Psoas muscle (tissue), 8 donors: ENCODE measurements at regions of chr22 and their contacts with region 1.

Region 1: DNA sequence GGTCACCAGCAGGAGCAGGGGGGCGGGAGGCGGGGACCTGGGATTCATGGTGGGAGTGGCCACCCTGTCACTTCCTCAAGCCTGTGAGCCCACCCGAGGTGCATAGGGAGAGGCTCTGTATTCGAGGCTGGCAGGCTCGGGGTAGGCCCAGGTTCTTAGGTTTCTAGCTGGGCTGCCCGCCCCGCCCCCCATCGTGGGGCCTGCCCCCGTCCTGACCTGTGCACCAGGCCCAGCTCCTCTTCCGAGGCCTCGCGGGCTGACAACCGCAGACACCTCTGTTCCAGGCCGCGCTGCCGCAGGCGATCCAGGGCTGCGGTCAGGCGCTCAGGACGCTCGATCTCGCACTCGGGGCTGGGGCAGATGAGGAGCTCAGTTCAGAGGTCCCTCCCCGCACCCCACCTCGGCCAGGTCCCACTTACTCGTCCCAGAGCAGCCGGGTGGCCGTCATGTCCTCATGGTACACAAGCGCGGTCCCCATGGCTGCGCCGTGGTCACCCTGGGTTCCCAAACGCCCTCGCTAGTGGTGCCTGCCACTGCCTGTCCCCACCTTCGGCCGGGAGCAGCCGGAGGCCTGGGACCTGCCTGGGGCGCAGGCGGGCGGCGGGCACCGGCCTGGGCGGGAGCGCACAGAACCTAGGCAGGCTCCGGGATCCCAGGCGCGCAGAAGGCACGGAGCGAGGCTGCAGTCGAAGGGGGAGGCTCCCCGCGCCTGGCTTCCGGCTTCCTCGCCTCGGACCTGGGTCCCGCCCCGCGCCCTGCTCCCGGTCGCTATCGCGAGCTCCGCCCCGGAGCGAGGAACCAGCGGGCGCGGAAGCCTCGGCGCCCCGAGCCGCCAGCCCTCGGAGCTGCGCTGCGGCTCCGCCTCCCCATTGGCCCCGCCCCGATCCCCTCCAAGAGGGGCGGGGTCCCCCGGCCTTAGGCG is at the start of gene HDAC10:
- DNase-seq: peak; percentile 80 to 87
- ATAC-seq: peak; percentile 28 to 53 (median 45)
- H3K4me3 ChIP-seq: peak within 1 kb of the TSS; percentile 70
- H3K27ac ChIP-seq: peak within 1 kb of the TSS; percentile 63
- H3K4me1 ChIP-seq: peaks cover 23% of the 10 kb centered on the region
- H3K27me3 ChIP-seq: no peaks in the 10 kb centered on the region
- CTCF ChIP-seq: no peak
- total RNA-seq, gene HDAC10: 13.5 to 19.4 (median 15.3) TPM

Region 2: GRCh38 chr22:50303848-50304527 is 53.2 kb after region 1 on chr22:
- intact Hi-C with region 1: loop called in 1 of 2 experiments (anchors 2 kb)
- DNase-seq: peak in 1 of 2 donors; percentile 59
- ATAC-seq: peak in 1 of 4 donors; percentile 37
- H3K4me3 ChIP-seq: peak overlapping the region; percentile 48
- H3K27ac ChIP-seq: peak overlapping the region; percentile 83
- H3K4me1 ChIP-seq: peaks cover 46% of the 10 kb centered on the region
- H3K27me3 ChIP-seq: peaks cover 0 to 9% (median 0%) of the 10 kb centered on the region in 3 donors
- CTCF ChIP-seq: no peak

Region 3: DNA sequence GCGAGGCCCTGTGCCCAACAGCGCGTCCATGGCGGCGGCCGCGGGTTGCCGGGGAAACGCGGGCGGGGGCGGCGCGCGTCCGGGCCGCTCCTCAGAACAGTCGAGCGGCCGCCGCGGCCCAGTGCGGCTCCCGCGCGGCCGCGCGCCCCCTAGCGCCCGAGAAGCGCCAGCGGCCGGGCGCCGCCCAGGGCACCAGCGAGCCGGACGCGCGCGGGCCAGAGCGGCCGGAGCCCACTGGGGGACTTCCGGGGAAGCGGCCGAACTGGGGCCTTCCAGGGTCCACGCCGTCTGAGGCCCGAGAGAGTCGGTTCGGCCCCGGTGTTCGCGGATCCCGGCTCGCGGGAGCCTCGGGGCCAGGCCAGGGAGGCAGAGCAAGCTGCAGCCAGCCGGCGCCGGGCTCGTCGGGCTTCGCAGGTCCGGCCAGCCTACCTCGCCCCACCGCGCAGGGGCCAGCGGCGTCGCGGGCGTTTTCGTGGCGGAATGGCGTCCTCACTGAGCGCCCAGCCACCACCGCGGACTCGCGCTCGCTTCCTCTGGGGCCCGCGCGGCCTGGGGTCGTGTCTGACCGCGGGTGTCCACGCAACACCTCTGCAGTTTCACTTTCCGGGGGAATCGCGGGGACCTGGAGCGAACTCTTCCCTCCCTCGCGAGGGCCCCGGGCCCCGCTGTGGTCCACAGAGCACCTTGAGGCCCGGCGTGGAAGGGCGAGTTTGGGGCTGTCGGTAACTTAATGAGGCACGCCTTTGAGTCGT is 76.3 kb after region 1 on chr22 and contains the start of gene DENND6B:
- intact Hi-C with region 1: loop called in 1 of 2 experiments (anchors 5 kb)
- DNase-seq: peak; percentile 88 to 91
- ATAC-seq: peak; percentile 93 to 98 (median 94)
- H3K4me3 ChIP-seq: peak within 1 kb of the TSS; percentile 88
- H3K27ac ChIP-seq: peak within 1 kb of the TSS; percentile 95
- H3K4me1 ChIP-seq: peaks cover 11% of the 10 kb centered on the region
- H3K27me3 ChIP-seq: no peaks in the 10 kb centered on the region
- CTCF ChIP-seq: peak; percentile 79
- total RNA-seq, gene DENND6B: 0.57 to 1.6 (median 0.94) TPM

Region 4: DNA sequence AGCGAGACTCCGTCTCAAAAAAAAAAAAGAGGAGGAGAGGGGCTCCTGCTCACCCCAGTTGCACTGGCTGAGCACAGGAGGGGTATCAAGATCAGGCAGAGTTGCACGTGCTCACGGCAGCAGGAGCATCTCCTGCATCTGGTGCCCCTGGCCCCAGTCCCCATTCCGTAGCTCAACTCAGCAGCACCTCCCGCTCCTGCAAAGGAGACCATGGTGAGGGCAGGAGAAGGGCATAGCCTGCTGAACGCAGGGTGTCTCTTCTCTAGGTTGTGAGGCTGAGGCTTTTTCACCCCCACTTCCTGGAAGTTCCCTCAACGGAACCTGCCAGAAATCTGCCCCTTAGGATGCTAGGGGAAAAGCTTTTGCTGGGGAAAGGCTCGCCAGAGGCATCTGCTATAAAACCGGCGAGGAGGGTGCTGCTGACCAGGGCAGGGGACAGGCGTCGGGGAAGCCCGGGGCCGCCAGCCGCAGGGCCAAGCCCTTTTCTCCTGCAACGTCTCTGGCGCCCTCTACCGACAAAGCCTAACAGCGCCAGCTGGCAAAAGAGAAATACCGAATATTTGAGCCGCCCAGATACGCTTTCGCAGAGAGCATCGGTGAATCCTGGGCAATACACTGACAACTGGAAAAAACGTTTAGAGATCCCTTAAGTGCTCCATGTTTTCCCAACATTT is 91.3 kb after region 1 on chr22:
- intact Hi-C with region 1: loop called in 1 of 2 experiments (anchors 5 kb)
- DNase-seq: peak; percentile 89 to 94
- ATAC-seq: peak; percentile 81 to 92 (median 86)
- H3K4me3 ChIP-seq: peak overlapping the region; percentile 87
- H3K27ac ChIP-seq: peak overlapping the region; percentile 83
- H3K4me1 ChIP-seq: peaks cover 5% of the 10 kb centered on the region
- H3K27me3 ChIP-seq: no peaks in the 10 kb centered on the region
- CTCF ChIP-seq: peak; percentile 92

Region 5: GRCh38 chr22:50507991-50508884 is 257.4 kb after region 1 on chr22 and contains the start of gene NCAPH2:
- intact Hi-C with region 1: loop called in 1 of 2 experiments (anchors 10 kb)
- DNase-seq: peak; percentile 94 to 98
- ATAC-seq: peak; percentile 81 to 90 (median 82)
- H3K4me3 ChIP-seq: peak within 1 kb of the TSS; percentile 89
- H3K27ac ChIP-seq: peak within 1 kb of the TSS; percentile 85
- H3K4me1 ChIP-seq: peaks cover 17% of the 10 kb centered on the region
- H3K27me3 ChIP-seq: no peaks in the 10 kb centered on the region
- CTCF ChIP-seq: no peak
- total RNA-seq, gene NCAPH2: 19.2 to 24.2 (median 21.7) TPM